ENCODE measurements at regions of chr20 and their contacts with region 1.

Region 1: GRCh38 chr20:34312544-34313217 is 9.5 kb upstream of the AHCY start:
- DNase-seq: peak; percentile 81
- ATAC-seq: peak; percentile 79
- H3K4me3 ChIP-seq: peak overlapping the region; percentile 2 to 36; a peak in 1 of 4 replicates
- H3K27ac ChIP-seq: 0 out of 2 replicates have a peak overlapping the region, but pooled peaks have one; percentile 11
- H3K4me1 ChIP-seq: peaks cover 39 to 71% of the 10 kb centered on the region in 2 experiments
- H3K27me3 ChIP-seq: no peaks in the 10 kb centered on the region
- CTCF ChIP-seq: peak; percentile 100
- POLR2A ChIP-seq: no peak
- RAD21 ChIP-seq: peak; percentile 100

Region 2: DNA sequence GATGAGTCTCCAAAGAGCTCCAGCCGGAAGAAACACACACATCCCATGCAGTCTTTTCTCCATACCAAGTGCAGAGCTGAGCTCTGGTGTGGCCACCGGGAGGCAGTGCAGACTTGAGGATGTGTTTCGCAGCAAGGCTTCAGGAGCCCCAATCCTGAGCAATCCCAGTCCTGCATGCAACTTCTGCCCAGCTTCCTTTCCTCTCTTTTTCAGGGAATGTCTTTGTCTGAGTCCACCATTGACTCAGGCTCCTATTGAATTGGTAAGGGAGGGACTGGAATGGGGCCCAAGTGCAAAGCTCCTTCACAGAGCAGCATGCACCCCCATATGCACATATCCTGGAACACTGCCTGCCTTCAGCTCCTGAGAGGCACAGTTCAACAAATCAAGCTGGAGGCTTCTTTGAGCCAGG is 122.0 kb before region 1 on chr20:
- CTCF ChIA-PET with region 1: interaction called, 15 read pairs
- POLR2A ChIA-PET with region 1: no interaction called
- RAD21 ChIA-PET with region 1: interaction called in 1 of 2 experiments, 5 read pairs
- intact Hi-C with region 1: loop called (anchors 2 kb)
- DNase-seq: peak; percentile 67
- ATAC-seq: peak; percentile 100
- H3K4me3 ChIP-seq: no peak overlapping the region
- H3K27ac ChIP-seq: no peak overlapping the region
- H3K4me1 ChIP-seq: no peaks in the 10 kb centered on the region
- H3K27me3 ChIP-seq: no peaks in the 10 kb centered on the region
- CTCF ChIP-seq: peak; percentile 70 to 95 (median 88); a peak in 5 of 6 replicates
- POLR2A ChIP-seq: no peak
- RAD21 ChIP-seq: peak; percentile 95

Region 3: DNA sequence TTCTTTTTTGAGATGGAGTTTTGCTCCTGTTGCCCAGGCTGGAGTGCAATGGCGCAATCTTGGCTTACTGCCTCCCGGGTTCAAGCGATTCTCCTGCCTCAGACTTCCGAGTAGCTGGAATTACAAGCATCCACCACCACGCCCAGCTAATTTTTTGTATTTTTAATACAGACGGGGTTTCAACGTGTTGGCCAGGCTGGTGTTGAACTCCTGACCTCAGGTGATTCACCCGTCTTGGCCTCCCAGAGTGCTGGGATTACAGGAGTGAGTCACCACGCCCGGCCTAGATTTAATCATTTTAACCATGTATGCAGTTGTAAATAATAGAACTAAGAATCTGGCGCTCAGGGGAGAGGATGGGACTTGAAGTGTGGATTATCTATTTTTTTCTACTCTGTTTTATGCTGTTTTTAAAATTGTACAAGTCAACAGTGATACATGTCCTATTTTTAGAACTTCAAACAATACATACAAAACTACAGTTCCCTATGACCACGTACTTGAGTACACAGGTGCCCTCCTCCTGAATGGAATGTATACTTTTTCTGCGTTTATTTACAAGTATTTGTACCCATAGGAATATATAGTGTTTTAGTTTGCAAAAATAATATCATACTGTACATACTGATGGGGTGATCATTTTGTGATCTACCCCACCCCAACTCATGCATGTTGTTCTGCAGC is 78.2 kb after region 1 on chr20:
- CTCF ChIA-PET with region 1: interaction called, 8 read pairs
- POLR2A ChIA-PET with region 1: no interaction called
- RAD21 ChIA-PET with region 1: interaction called in 1 of 2 experiments, 6 read pairs
- intact Hi-C with region 1: loop called (anchors 2 kb)
- DNase-seq: peak; percentile 85
- ATAC-seq: peak; percentile 91
- H3K4me3 ChIP-seq: peak overlapping the region; percentile 6 to 49; a peak in 2 of 4 replicates
- H3K27ac ChIP-seq: peak overlapping the region; percentile 83
- H3K4me1 ChIP-seq: peaks cover 59 to 79% of the 10 kb centered on the region in 2 experiments
- H3K27me3 ChIP-seq: no peaks in the 10 kb centered on the region
- CTCF ChIP-seq: no peak
- POLR2A ChIP-seq: no peak
- RAD21 ChIP-seq: peak; percentile 39; the same call in 1 of the 2 replicates

Region 4: DNA sequence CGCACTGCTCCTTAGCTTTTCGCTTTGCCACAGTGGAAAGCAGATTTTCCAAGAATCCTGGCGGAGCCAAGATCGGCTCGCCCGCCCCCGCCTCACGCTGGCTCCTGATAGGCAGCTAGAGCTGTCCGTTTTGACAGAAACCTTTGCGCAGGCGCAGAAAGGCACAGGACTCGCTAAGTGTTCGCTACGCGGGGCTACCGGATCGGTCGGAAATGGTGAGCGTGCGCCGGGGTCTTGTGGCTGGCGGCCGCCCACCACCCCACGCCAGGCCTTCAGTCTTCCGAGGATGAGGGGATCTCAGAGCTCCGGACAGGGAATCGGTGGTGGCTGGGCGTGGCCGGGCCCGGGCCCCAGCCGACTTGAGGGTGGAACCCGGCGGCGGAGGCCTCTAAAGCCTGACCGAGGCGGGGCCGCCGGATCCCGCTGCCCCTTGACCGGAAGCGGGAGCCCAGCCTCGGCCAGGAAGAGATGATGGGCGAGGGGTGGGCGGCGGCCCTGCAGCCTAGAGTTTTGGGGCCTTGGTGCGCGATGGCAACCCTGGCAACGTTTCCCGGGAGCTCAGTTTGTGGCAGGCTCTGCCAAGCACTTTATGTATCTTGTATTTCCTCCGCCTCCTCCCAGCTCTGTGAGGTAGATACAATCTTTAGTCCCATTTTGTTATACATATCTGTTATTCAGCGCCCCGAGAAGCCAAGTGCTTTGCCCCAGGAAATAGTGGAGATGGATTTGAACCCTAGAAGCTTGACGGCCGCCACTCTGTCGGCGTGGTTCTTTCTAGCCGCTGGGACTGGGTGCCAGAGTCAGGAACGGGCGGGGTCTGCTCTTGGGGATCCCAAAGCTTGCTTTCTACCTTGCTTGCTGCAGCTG is 203.8 kb after region 1 on chr20 and contains the start of gene DYNLRB1:
- CTCF ChIA-PET with region 1: interaction called, 127 read pairs
- POLR2A ChIA-PET with region 1: interaction called, 7 read pairs
- RAD21 ChIA-PET with region 1: interaction called in 1 of 2 experiments, 20 read pairs
- intact Hi-C with region 1: no loop called
- DNase-seq: peak; percentile 87
- ATAC-seq: peak; percentile 96
- H3K4me3 ChIP-seq: peak within 1 kb of the TSS; percentile 72 to 87
- H3K27ac ChIP-seq: peak within 1 kb of the TSS; percentile 79
- H3K4me1 ChIP-seq: peaks cover 4 to 7% of the 10 kb centered on the region in 2 experiments; a peak in 3 of 4 replicates
- H3K27me3 ChIP-seq: no peaks in the 10 kb centered on the region
- CTCF ChIP-seq: no peak
- POLR2A ChIP-seq: peak; percentile 70
- RAD21 ChIP-seq: no peak
- total RNA-seq, gene DYNLRB1: 106 TPM

Region 5: GRCh38 chr20:34704177-34705007 is 391.7 kb after region 1 on chr20 and contains the start of gene TP53INP2:
- CTCF ChIA-PET with region 1: interaction called, 10 read pairs
- POLR2A ChIA-PET with region 1: no interaction called
- RAD21 ChIA-PET with region 1: interaction called, 3 to 6 read pairs
- intact Hi-C with region 1: loop called (anchors 5 kb)
- DNase-seq: peak; percentile 74
- ATAC-seq: peak; percentile 61
- H3K4me3 ChIP-seq: peak within 1 kb of the TSS; percentile 57 to 77
- H3K27ac ChIP-seq: peak within 1 kb of the TSS; percentile 52; the same call in 1 of the 2 replicates
- H3K4me1 ChIP-seq: peaks cover 21 to 43% of the 10 kb centered on the region in 2 experiments
- H3K27me3 ChIP-seq: no peaks in the 10 kb centered on the region
- CTCF ChIP-seq: no peak
- POLR2A ChIP-seq: peak; percentile 10
- RAD21 ChIP-seq: no peak
- total RNA-seq, gene TP53INP2: 7.1 TPM

Measured in HCT116 (cell line).